ENCODE measurements at regions of chr6 and their contacts with region 1.

Region 1: DNA sequence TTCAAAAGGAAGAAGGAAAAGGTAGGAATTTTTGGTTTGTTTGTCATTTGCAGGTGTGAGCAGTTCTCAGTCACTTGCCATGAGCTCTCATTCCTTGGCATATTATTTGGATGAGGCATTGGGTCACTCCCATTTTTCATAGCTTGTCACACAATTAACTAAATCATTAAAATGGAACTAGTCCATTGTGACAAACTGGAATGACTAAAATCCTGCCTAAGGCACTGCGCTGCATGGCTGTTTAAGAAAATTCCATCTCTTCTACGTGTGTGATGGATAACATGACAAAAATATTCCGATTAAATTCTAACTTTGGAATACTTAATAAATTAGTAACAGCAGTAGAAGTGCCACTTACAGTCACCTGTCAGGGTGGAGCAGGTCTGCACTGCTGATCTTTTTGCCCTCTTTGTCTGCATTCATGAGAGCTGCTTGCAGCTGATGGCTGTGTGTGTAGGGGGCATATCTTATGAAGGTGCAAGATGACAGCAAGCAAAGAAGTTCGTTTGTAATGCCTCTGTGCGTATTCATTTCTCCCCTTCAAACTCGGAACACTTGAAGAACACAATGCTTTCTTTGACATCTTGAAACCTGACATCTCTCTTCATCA is 1292.6 kb upstream of the MAP3K7 start:
- DNase-seq: peak; percentile 55 to 77
- H3K4me3 ChIP-seq: no peak overlapping the region
- H3K27ac ChIP-seq: no peak overlapping the region
- H3K4me1 ChIP-seq: no peaks in the 10 kb centered on the region
- H3K27me3 ChIP-seq: no peaks in the 10 kb centered on the region
- CTCF ChIP-seq: no peak

Region 2: GRCh38 chr6:91475975-91476374 is 403.5 kb before region 1 on chr6:
- CTCF ChIA-PET with region 1: no interaction called
- POLR2A ChIA-PET with region 1: no interaction called
- intact Hi-C with region 1: loop called (anchors 10 kb)
- DNase-seq: peak; percentile 39 to 45
- H3K4me3 ChIP-seq: no peak overlapping the region
- H3K27ac ChIP-seq: no peak overlapping the region
- H3K4me1 ChIP-seq: no peaks in the 10 kb centered on the region
- H3K27me3 ChIP-seq: no peaks in the 10 kb centered on the region
- CTCF ChIP-seq: no peak

Region 3: DNA sequence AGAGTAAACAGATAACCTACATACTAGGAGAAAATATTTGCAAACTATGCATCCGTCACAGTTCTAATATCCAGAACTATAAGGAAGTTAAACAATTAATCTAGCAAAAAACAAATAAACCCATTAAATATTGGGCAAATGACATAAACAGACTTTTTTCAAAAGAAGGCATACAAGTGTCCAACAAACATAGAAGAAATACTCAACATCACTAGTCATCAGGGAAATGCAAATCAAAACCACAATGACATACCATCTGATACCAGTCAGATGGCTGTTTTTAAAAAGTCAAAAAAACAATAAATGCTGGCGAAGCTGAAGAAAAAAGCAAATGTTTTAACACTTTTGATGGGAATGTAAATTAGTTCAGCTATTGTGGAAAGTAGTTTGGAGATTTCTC is 175.0 kb before region 1 on chr6:
- CTCF ChIA-PET with region 1: no interaction called
- POLR2A ChIA-PET with region 1: no interaction called
- intact Hi-C with region 1: loop called (anchors 5 kb)
- DNase-seq: peak in 1 of 2 experiments; percentile 81
- H3K4me3 ChIP-seq: no peak overlapping the region
- H3K27ac ChIP-seq: no peak overlapping the region
- H3K4me1 ChIP-seq: peaks cover 18% of the 10 kb centered on the region
- H3K27me3 ChIP-seq: no peaks in the 10 kb centered on the region
- CTCF ChIP-seq: no peak

Region 4: DNA sequence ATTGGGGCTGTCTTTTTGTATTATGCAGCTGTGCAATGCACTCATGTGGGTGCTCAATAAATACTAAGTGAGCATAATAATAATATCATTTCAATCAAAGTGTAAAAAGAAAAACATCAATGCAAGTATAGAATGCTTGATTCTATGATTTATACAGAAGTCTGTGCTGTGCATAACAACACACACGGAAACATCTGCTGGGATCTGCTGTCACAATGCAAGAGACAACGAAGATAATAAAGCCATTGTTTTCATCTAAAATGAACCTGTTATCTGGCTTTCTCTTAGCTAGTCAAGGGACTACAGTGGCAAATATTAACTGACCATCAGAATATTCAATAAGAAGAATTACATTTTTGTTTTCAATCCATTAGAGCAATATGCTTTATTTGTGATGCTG is 135.7 kb before region 1 on chr6:
- CTCF ChIA-PET with region 1: no interaction called
- POLR2A ChIA-PET with region 1: no interaction called
- intact Hi-C with region 1: loop called (anchors 2 kb)
- DNase-seq: no peak
- H3K4me3 ChIP-seq: no peak overlapping the region
- H3K27ac ChIP-seq: no peak overlapping the region
- H3K4me1 ChIP-seq: no peaks in the 10 kb centered on the region
- H3K27me3 ChIP-seq: no peaks in the 10 kb centered on the region
- CTCF ChIP-seq: no peak

Region 5: GRCh38 chr6:91865889-91866288 is 13.6 kb before region 1 on chr6:
- CTCF ChIA-PET with region 1: no interaction called
- POLR2A ChIA-PET with region 1: no interaction called
- intact Hi-C with region 1: loop called (anchors 1 kb)
- DNase-seq: no peak
- H3K4me3 ChIP-seq: no peak overlapping the region
- H3K27ac ChIP-seq: no peak overlapping the region
- H3K4me1 ChIP-seq: no peaks in the 10 kb centered on the region
- H3K27me3 ChIP-seq: no peaks in the 10 kb centered on the region
- CTCF ChIP-seq: no peak

Region 6: GRCh38 chr6:91895599-91896285 is 16.3 kb after region 1 on chr6:
- CTCF ChIA-PET with region 1: no interaction called
- POLR2A ChIA-PET with region 1: no interaction called
- intact Hi-C with region 1: no loop called
- DNase-seq: no peak
- H3K4me3 ChIP-seq: no peak overlapping the region
- H3K27ac ChIP-seq: no peak overlapping the region
- H3K4me1 ChIP-seq: no peaks in the 10 kb centered on the region
- H3K27me3 ChIP-seq: no peaks in the 10 kb centered on the region
- CTCF ChIP-seq: no peak

Measured in PC-9 (cell line).